ENCODE measurements at regions of chr6 and their contacts with region 1.

Region 1: DNA sequence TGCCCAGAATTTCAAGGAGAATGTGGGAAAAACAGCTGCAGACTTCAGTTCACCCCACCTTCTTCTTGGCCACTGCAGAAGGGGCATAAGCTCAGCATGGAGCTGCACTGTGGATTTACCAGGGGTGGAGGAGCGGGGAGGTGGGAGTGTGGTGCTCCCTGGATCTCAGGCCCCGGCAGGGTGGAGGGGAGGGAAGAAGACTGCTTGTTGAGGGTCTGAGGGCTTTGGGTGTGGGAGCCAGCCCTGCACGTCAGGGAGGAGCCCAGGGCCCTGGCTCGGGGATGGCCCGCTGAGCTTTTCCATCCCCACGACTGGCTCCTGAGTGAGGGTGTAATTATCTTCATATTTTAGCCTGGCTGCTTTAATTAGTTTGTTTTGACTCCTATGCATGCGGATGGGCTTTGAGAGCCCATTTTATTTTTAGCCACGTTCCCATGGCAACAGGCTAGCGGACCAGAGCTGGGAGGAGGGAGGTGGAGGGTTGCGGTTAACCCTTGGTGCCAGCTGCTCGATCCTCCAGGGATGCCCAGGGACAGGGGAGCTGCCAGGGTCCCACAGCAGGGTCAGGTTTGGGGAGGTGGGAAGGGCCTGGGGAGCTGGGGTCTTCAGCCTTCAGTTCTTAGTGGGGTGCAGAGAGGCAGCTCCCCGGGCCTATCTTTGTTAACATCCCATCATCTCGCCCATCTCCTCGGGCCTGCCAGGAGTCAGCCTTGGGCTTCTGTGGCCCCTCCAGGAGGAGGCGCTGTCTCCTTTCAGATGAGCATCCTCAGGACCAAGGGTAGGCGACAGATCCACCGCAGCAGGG is 68.2 kb downstream of the RAB44 start:
- DNase-seq: peak; percentile 86 to 90 (median 88)
- ATAC-seq: peak; percentile 85
- H3K4me3 ChIP-seq: no peak overlapping the region
- H3K27ac ChIP-seq: no peak overlapping the region
- H3K4me1 ChIP-seq: peaks cover 12% of the 10 kb centered on the region
- H3K27me3 ChIP-seq: no peaks in the 10 kb centered on the region
- CTCF ChIP-seq: peak; percentile 71 to 96 (median 91)
- POLR2A ChIP-seq: no peak

Region 2: DNA sequence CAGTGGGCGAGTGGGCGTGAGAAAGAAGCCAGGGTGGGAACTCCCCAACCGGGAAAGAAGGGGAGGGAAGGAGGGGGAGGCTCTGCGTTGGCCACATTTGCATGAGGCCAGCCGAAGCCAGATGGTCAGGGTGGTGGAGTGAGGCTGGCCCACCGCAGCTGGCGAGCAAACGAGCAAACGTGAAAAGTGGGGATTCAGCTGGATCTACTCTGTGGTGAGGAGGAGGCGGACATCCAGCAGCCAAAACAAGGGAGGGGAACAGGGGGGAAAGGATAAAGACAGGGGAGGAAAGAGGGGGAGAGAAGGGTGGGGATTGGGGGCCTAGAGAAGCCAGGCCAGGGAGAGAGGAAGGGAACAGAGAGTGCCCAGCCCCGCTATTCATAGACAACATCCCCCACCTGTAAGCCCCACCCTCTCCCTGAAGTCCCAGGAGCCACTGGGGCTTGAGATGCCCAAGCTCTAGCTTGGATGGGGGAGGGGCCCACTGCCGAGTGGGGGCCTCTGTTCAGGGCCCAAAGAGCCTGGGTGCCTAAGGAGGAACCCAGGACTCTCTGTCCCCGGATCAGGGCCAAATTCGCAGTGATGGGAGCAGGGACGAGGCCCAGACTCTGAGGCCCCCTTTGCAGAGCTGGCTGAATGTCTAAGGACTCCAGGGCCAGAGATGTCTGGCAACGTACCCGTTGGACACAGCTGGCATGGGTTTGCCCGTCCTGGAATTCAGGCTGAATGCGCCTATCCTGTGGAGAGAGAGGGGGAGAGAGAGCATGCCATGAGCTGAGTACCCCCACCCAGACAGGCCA is 28.3 kb after region 1 on chr6:
- intact Hi-C with region 1: no loop called
- DNase-seq: no peak
- ATAC-seq: no peak
- H3K4me3 ChIP-seq: no peak overlapping the region
- H3K27ac ChIP-seq: no peak overlapping the region
- H3K4me1 ChIP-seq: no peaks in the 10 kb centered on the region
- H3K27me3 ChIP-seq: no peaks in the 10 kb centered on the region
- CTCF ChIP-seq: no peak
- POLR2A ChIP-seq: no peak

Region 3: DNA sequence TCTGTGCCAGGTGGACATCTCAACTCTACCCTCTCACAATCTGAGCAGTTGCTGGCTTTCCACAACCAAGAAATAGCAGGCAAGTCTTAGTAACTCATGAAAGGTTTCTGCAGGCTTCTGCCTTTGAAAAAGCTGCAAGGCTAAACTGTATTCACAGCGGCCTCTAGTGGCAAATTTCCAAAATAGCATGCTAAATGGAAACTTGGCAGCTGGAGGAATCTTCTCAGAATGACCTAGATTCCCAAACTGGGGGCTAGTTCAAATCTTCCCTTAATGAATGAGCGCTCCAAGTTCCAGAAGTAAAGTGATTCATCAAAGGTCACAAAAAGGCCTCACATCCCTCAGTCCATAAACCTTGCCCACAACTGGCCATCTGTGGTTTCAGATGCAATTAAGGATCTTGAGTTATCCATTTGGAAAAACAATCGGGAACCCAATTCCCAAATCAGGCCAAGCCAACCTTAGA is 85.4 kb after region 1 on chr6:
- intact Hi-C with region 1: loop called (anchors 5 kb)
- DNase-seq: peak; percentile 59 to 71 (median 64)
- ATAC-seq: peak; percentile 49
- H3K4me3 ChIP-seq: no peak overlapping the region
- H3K27ac ChIP-seq: no peak overlapping the region
- H3K4me1 ChIP-seq: peaks cover 17% of the 10 kb centered on the region
- H3K27me3 ChIP-seq: no peaks in the 10 kb centered on the region
- CTCF ChIP-seq: peak; percentile 31 to 88 (median 77)
- POLR2A ChIP-seq: no peak

Region 4: DNA sequence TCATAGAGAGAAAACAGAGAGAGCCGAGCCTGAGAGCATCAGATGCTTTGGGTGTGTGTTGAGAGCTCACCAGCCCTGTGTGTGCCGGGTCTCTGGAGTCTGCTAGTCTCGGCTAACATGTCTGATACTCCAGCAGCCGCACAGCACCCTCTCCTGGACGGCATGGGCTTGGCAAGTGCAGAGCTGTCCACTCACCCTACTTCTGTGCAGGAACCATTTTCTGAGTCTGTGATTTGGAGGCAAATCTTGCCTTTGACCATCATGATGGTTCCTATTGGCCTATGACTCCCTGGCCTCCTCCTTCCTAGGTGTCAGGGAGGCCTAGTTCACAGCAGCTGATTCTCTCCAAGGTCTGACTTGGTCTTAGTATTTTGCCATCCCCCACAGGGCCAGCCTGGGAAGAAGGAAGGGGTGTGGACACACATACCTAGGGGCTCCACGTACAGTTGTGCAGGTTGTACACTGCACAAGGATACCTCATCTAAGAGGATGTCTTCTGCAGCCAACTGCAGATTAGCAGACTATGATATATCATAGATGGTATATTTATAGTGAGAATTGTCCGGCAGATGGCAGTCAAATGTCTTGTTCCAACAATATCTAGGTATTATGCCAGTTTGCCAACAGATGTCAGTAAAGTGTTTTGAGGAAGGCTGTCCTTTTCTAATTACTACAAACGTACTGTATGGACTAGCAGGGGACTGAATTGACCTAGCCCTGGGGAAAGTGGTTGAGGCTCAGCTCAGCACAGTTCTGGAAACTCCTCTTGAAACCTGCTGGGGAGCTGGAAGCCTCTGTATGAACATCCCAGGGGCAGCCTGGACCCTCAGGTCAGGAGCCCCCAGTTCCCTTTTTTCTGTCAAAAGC is 252.6 kb after region 1 on chr6:
- intact Hi-C with region 1: loop called (anchors 10 kb)
- DNase-seq: peak; percentile 93 to 96 (median 94)
- ATAC-seq: peak; percentile 95
- H3K4me3 ChIP-seq: no peak overlapping the region
- H3K27ac ChIP-seq: peak overlapping the region in 3 of 4 donors; percentile 27 to 66 (median 47)
- H3K4me1 ChIP-seq: peaks cover 33% of the 10 kb centered on the region
- H3K27me3 ChIP-seq: no peaks in the 10 kb centered on the region
- CTCF ChIP-seq: peak; percentile 51 to 97 (median 96)
- POLR2A ChIP-seq: no peak

Region 5: GRCh38 chr6:37207903-37208456 is 442.2 kb after region 1 on chr6:
- intact Hi-C with region 1: loop called (anchors 10 kb)
- DNase-seq: peak; percentile 80 to 87 (median 86)
- ATAC-seq: peak; percentile 72
- H3K4me3 ChIP-seq: no peak overlapping the region
- H3K27ac ChIP-seq: no peak overlapping the region
- H3K4me1 ChIP-seq: peaks cover 5% of the 10 kb centered on the region
- H3K27me3 ChIP-seq: no peaks in the 10 kb centered on the region
- CTCF ChIP-seq: peak; percentile 31 to 79 (median 61)
- POLR2A ChIP-seq: no peak